Activated B cell treated with CpG ODN at 0.5 μM for 24 hours (primary cell): ENCODE measurements at regions of chr14 and their contacts with region 1.

Region 1: DNA sequence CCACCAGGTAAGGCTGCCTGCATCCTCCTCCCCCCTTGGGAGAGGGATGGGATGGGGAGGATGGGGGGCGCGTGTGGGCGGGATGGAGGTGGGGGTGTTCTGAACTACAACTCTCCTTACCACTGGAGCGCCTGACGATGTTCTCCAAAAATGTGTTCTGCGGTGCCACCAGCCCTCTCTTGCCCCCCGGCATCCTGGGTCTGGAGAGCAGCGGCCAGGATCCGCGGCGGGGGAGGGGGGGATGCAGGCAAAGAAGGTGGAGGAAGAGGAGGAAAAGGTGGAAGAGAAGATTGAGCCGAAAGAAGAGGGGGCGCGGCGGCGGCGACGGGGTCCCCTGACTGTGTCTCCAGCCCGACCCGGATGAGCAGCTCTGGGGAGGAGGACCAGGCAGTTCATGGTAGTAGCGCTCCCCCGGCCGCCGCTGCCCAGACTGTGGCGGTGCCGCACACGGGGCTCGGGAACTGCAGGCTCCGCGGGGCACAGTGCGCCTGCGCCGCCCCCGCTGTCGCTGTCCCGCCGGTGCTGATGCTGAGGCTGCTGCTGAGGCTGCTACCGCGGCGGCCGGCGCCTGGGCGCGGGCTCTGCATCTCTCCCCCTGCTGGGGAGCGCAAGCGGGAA is at the start of gene KCNH5:
- DNase-seq: no peak
- ATAC-seq: no peak
- H3K4me3 Mint-ChIP-seq: no peak within 1 kb of the TSS
- H3K27ac Mint-ChIP-seq: no peak within 1 kb of the TSS
- H3K4me1 Mint-ChIP-seq: peaks cover 2% of the 10 kb centered on the region
- H3K27me3 Mint-ChIP-seq: peaks cover 23% of the 10 kb centered on the region
- CTCF ChIP-seq: no peak
- total RNA-seq, gene KCNH5: not detected in 2 replicates

Region 2: GRCh38 chr14:62162998-62163589 is 882.0 kb before region 1 on chr14:
- CTCF ChIA-PET with region 1: no interaction called
- POLR2A ChIA-PET with region 1: no interaction called
- intact Hi-C with region 1: loop called (anchors 5 kb)
- DNase-seq: no peak
- ATAC-seq: peak; percentile 21
- H3K4me3 Mint-ChIP-seq: no peak overlapping the region
- H3K27ac Mint-ChIP-seq: no peak overlapping the region
- H3K4me1 Mint-ChIP-seq: no peaks in the 10 kb centered on the region
- H3K27me3 Mint-ChIP-seq: peaks cover 22% of the 10 kb centered on the region
- CTCF ChIP-seq: no peak